Left cardiac atrium (tissue), 4 donors: ENCODE measurements at regions of chr19 and their contacts with region 1.

Region 1: DNA sequence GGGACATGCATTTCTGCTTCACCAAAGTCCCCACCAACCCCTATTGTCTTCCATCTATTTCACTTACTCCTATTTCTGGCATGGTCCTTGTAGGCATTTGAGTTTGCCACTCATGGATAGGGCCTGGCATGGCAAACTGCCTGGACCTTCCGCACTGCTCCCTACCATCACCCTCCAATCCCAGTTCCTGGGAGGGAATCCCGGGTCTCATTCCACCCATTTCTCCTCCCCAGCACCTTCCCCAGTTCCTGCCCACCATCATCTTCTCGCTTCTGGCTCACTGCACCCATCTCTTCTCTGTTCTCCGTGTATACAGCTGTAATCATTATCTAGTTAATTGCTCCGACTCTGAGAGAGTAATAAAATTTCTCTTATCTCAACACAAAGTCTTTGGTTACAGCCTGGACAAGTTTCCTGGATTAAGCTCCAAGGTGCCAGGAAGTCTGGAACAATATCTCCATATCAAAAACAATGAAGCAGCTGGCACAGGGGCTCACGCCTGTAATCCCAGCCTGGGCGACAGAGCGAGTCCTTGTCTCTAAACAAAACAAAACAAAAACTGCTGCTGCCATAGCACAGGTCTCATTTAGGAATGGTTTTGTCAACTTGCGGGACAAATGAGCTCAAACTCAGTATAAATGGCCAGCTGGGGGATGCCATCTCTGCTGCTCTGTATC is 17.0 kb upstream of the COX7A1 start:
- DNase-seq: peak; percentile 44
- ATAC-seq: peak; percentile 29 to 48

Region 2: DNA sequence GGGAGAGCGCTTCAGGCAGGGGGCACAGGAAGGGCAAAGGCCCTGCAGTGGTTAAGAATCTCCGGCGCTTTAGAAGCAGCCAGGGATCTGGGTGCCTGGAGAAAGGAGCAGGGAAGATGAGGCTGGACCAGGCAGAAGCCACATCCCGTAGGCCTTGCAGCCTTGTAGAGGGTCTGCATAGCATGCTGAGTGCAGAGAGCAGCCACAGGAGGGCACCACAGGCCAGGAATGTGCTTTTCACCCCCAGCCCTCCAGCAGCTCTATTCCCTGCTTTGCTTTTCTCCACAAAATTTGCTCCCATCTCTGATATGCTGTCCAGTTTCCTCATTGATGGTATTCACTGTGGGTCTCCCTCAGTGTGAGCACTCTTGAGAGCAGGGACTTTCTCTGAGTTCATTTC is 108.8 kb before region 1 on chr19:
- intact Hi-C with region 1: loop called (anchors 2 to 10 kb)
- DNase-seq: peak; percentile 35
- ATAC-seq: peak; percentile 84 to 86

Region 3: DNA sequence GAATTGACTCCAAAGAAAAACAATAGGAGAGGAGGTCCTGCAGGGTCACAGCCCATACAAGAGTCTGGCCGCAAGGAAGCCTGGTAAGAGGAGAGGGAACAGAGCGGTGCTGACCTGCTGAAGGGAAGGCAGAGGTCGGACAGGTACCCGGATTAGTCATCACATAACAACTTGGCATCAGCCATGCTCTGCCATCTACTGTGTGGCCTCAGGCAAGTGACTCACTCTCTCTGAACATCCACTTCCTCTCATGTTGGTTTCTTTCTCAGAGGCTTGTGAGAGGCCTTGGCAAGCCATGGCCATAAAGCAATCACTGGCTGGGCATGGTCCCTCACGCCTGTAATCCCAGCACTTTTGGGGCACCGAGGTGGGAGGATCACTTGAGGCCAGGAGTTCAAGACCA is 36.7 kb before region 1 on chr19:
- intact Hi-C with region 1: loop called (anchors 1 to 2 kb)
- DNase-seq: no peak
- ATAC-seq: no peak

Region 4: GRCh38 chr19:36245210-36246005 is 76.2 kb after region 1 on chr19:
- intact Hi-C with region 1: no loop called
- DNase-seq: no peak
- ATAC-seq: peak; percentile 61 to 70